Activated CD4-positive, alpha-beta T cell treated with anti-CD3 and anti-CD28 coated beads for 36 hours (primary cell): ENCODE measurements at regions of chr2 and their contacts with region 1.

Region 1: GRCh38 chr2:204051476-204051875 is 114.9 kb downstream of the ICOS start:
- DNase-seq: no peak
- ATAC-seq: no peak
- H3K4me3 Mint-ChIP-seq: no peak overlapping the region
- H3K27ac Mint-ChIP-seq: no peak overlapping the region
- H3K4me1 Mint-ChIP-seq: peaks cover 15% of the 10 kb centered on the region
- H3K27me3 Mint-ChIP-seq: no peaks in the 10 kb centered on the region

Region 2: GRCh38 chr2:203972066-203972465 is 79.4 kb before region 1 on chr2:
- CTCF ChIA-PET with region 1: no interaction called
- POLR2A ChIA-PET with region 1: no interaction called
- intact Hi-C with region 1: no loop called
- DNase-seq: no peak
- ATAC-seq: no peak
- H3K4me3 Mint-ChIP-seq: no peak overlapping the region
- H3K27ac Mint-ChIP-seq: no peak overlapping the region
- H3K4me1 Mint-ChIP-seq: peaks cover 27% of the 10 kb centered on the region
- H3K27me3 Mint-ChIP-seq: no peaks in the 10 kb centered on the region

Region 3: DNA sequence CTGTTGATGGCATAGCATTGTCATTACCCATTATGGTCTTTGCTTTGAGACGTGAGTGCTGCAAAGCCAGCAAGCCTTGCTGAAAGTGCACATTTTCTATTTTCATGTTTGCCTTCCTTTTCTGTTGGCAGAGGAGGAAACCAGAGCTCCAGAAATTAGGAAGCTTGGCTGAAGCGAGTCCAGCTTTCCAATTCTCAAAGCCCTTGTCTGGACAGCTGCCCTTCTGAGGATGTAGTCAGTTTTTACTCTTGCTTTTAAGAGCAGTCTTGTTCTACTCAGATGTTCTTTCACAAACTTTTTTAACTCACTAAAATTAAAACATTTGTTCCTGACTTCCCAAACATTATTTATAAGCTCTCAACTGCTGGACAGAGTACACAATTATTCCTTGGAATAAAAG is 21.2 kb before region 1 on chr2:
- CTCF ChIA-PET with region 1: interaction called, 13 read pairs
- POLR2A ChIA-PET with region 1: no interaction called
- intact Hi-C with region 1: no loop called
- DNase-seq: no peak
- ATAC-seq: no peak
- H3K4me3 Mint-ChIP-seq: no peak overlapping the region
- H3K27ac Mint-ChIP-seq: no peak overlapping the region
- H3K4me1 Mint-ChIP-seq: peaks cover 20% of the 10 kb centered on the region
- H3K27me3 Mint-ChIP-seq: no peaks in the 10 kb centered on the region

Region 4: GRCh38 chr2:204039298-204039838 is 12.1 kb before region 1 on chr2:
- CTCF ChIA-PET with region 1: interaction called, 14 read pairs
- POLR2A ChIA-PET with region 1: no interaction called
- intact Hi-C with region 1: no loop called
- DNase-seq: no peak
- ATAC-seq: no peak
- H3K4me3 Mint-ChIP-seq: no peak overlapping the region
- H3K27ac Mint-ChIP-seq: no peak overlapping the region
- H3K4me1 Mint-ChIP-seq: peaks cover 1% of the 10 kb centered on the region
- H3K27me3 Mint-ChIP-seq: no peaks in the 10 kb centered on the region

Region 5: GRCh38 chr2:204353823-204354222 is 302.3 kb after region 1 on chr2:
- CTCF ChIA-PET with region 1: no interaction called
- POLR2A ChIA-PET with region 1: no interaction called
- intact Hi-C with region 1: no loop called
- DNase-seq: no peak
- ATAC-seq: no peak
- H3K4me3 Mint-ChIP-seq: no peak overlapping the region
- H3K27ac Mint-ChIP-seq: no peak overlapping the region
- H3K4me1 Mint-ChIP-seq: no peaks in the 10 kb centered on the region
- H3K27me3 Mint-ChIP-seq: peaks cover 8% of the 10 kb centered on the region